PC-3 (cell line): ENCODE measurements at regions of chr5 and their contacts with region 1.

Region 1: DNA sequence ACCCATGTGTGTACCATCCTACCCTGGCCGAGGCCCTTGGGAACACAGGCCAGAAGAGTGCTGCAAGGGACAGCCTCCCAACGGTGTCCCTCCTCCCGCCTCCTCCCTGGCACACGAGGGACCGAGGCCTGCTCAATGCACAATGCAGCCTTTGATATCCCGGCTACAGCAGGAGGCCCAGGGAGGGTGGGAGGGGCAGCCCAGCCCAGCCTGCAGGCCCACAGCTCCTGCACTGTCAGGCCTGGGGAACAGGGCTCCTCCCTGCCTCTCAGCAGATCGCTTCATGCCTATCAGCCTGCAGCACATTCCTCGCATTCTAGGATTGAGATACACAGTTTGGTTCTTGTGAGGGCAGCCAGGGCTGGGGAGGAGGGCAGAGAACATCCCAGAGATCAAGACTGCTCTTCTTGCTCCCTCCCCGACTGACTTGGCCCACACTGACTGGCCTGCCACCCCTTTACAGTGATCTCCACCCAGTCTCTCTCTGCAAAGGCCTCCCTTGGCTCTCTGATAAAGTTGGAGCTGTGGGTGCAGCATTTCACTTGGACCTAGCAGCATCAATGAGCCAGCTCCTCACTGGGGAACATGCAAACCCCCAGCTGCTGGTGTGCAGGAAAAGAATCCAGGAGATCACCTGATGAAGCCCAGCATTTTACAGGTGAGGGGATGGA is at the start of gene SH3TC2:
- DNase-seq: peak; percentile 96
- ATAC-seq: peak; percentile 76
- H3K4me3 ChIP-seq: peak within 1 kb of the TSS; percentile 47
- H3K27ac ChIP-seq: peak within 1 kb of the TSS; percentile 95
- H3K4me1 ChIP-seq: peaks cover 58% of the 10 kb centered on the region
- H3K27me3 ChIP-seq: no peaks in the 10 kb centered on the region
- CTCF ChIP-seq: no peak
- total RNA-seq, gene SH3TC2: 32.0 and 40.0 TPM in 2 replicates

Region 2: GRCh38 chr5:148939676-148940075 is 123.5 kb before region 1 on chr5:
- CTCF ChIA-PET with region 1: no interaction called
- POLR2A ChIA-PET with region 1: no interaction called
- intact Hi-C with region 1: loop called (anchors 1 kb)
- DNase-seq: peak; percentile 100
- ATAC-seq: peak; percentile 90
- H3K4me3 ChIP-seq: no peak overlapping the region
- H3K27ac ChIP-seq: peak overlapping the region; percentile 81
- H3K4me1 ChIP-seq: peaks cover 23% of the 10 kb centered on the region
- H3K27me3 ChIP-seq: no peaks in the 10 kb centered on the region
- CTCF ChIP-seq: no peak

Region 3: DNA sequence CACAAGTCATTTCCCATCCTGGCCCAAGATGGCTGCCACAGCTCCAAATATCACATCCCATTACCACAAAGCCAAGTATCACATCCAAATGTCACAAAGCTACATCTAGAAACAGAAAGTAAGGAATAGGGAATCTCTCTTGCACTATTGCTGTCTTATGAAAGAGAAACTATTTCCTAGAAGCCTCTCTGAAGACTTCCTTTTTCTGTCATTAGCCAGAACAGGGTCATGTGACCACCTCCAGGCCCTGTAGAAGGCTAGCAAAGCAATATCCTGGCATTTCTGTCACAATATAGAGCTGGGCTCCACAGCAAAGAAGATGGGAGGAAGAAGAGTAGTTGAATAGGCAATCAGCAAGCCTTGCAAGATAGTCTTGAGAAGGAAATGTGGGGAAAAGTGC is 99.5 kb before region 1 on chr5:
- CTCF ChIA-PET with region 1: no interaction called
- POLR2A ChIA-PET with region 1: no interaction called
- intact Hi-C with region 1: loop called (anchors 2 kb)
- DNase-seq: no peak
- ATAC-seq: no peak
- H3K4me3 ChIP-seq: no peak overlapping the region
- H3K27ac ChIP-seq: peak overlapping the region; percentile 79; the same call in 1 of the 2 replicates
- H3K4me1 ChIP-seq: peaks cover 81% of the 10 kb centered on the region
- H3K27me3 ChIP-seq: no peaks in the 10 kb centered on the region
- CTCF ChIP-seq: no peak

Region 4: DNA sequence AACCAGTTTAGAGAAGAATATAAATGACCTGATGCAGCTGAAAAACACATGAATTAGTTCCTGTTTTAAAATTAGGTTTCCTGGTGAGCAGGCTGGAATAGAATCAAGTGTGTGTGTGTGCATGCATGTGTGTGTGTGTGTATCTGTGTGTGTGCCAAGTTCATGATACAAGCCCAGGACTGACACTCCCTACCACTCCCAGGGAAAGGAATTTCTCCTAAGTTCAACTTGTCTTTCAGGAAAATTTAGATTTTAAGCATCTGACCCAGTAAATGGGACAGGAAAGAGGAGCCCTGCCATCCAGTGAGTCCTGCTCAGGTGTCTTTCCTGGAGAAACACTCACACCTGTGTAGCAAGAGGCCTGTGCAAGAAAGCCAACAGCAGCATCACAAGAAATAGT is 11.0 kb after region 1 on chr5:
- CTCF ChIA-PET with region 1: interaction called, 16 read pairs
- POLR2A ChIA-PET with region 1: interaction called, 10 read pairs
- intact Hi-C with region 1: loop called (anchors 1 kb)
- DNase-seq: peak; percentile 98
- ATAC-seq: peak; percentile 44
- H3K4me3 ChIP-seq: no peak overlapping the region
- H3K27ac ChIP-seq: peak overlapping the region; percentile 82
- H3K4me1 ChIP-seq: peaks cover 53% of the 10 kb centered on the region
- H3K27me3 ChIP-seq: no peaks in the 10 kb centered on the region
- CTCF ChIP-seq: no peak

Region 5: GRCh38 chr5:149121145-149121544 is 58.0 kb after region 1 on chr5:
- CTCF ChIA-PET with region 1: no interaction called
- POLR2A ChIA-PET with region 1: no interaction called
- intact Hi-C with region 1: no loop called
- DNase-seq: no peak
- ATAC-seq: no peak
- H3K4me3 ChIP-seq: no peak overlapping the region
- H3K27ac ChIP-seq: no peak overlapping the region
- H3K4me1 ChIP-seq: peaks cover 36% of the 10 kb centered on the region
- H3K27me3 ChIP-seq: no peaks in the 10 kb centered on the region
- CTCF ChIP-seq: no peak